Mammary epithelial cell (primary cell): ENCODE measurements at regions of chr14 and their contacts with region 1.

Region 1: GRCh38 chr14:32939254-32940065 is 781 bp downstream of the NPAS3 start:
- DNase-seq: peak; percentile 18
- H3K4me3 ChIP-seq: peak overlapping the region; percentile 56 to 58 (median 57)
- H3K27ac ChIP-seq: no peak overlapping the region
- H3K4me1 ChIP-seq: peaks cover 7% of the 10 kb centered on the region
- H3K27me3 ChIP-seq: peaks cover 26% of the 10 kb centered on the region
- CTCF ChIP-seq: no peak

Region 2: GRCh38 chr14:32588448-32589320 is 350.8 kb before region 1 on chr14:
- CTCF ChIA-PET with region 1: no interaction called
- dilution Hi-C with region 1: no loop called
- in situ Hi-C with region 1: no loop called
- intact Hi-C with region 1: loop called (anchors 10 kb)
- DNase-seq: peak; percentile 21
- H3K4me3 ChIP-seq: no peak overlapping the region
- H3K27ac ChIP-seq: no peak overlapping the region
- H3K4me1 ChIP-seq: peaks cover 15% of the 10 kb centered on the region
- H3K27me3 ChIP-seq: no peaks in the 10 kb centered on the region
- CTCF ChIP-seq: peak; percentile 80

Region 3: DNA sequence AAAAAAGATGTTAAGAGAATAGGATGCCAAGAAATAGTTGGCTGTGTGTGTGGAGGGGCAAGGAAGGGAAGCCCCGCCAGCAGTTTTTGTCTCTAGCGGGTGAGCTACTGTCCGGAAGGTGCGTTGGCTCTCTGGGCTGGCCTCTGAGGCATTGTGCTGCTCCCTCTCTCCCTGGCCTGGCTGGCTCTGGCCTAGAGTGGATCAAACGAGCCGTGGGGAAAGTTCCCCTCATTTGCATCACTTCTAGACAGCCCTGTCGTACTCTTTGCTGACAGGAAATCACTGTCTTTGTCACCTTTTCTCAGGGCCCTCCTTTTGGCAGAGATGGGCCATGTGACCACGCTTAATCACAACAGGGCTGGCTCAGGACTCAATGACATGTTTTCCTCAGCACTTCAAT is 236.9 kb before region 1 on chr14:
- CTCF ChIA-PET with region 1: no interaction called
- dilution Hi-C with region 1: no loop called
- in situ Hi-C with region 1: no loop called
- intact Hi-C with region 1: loop called (anchors 10 kb)
- DNase-seq: peak; percentile 21
- H3K4me3 ChIP-seq: no peak overlapping the region
- H3K27ac ChIP-seq: no peak overlapping the region
- H3K4me1 ChIP-seq: peaks cover 26% of the 10 kb centered on the region
- H3K27me3 ChIP-seq: no peaks in the 10 kb centered on the region
- CTCF ChIP-seq: no peak